A549 (cell line): ENCODE measurements at regions of chr1 and their contacts with region 1.

Region 1: DNA sequence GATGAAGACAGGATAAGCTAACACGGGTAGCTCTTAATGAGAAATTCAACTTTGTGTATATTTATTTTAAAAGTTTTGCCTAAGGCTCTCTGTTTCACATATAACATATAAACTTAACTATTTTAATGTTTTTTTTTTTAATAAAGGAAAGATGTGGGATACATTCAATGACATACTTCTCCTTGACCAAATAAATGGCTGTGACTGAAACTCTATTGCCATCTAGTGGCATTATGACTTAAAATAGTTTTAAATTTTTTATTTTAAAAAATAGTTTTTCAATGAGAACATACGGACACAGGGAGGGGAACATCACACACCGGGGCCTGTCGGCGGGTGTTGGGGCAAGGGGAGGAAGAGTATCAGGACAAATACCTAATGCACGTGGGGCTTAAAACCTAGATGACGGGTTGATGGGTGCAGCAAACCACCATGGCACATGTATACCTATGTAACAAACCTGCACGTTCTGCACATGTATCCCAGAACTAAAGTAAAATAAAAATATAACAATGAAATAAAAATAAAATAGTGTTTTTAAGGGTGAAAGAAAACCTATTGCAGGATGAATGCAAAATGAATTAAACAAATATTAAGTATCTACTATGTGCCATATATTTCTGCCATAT is 83.4 kb downstream of the LYST start:
- DNase-seq: peak; percentile 15 to 50
- ATAC-seq: peak in 1 of 2 experiments; percentile 42; a peak in 2 of 6 replicates
- H3K4me3 ChIP-seq: no peak overlapping the region
- H3K27ac ChIP-seq: peak overlapping the region in 1 of 2 experiments; percentile 55; a peak in 1 of 6 replicates
- H3K4me1 ChIP-seq: 0 out of 3 replicates have a peak, but pooled peaks cover 5% of the 10 kb centered on the region
- CTCF ChIP-seq: peak; percentile 77
- EP300 ChIP-seq: no peak
- POLR2A ChIP-seq: no peak
- RAD21 ChIP-seq: peak; percentile 81 to 90

Region 2: DNA sequence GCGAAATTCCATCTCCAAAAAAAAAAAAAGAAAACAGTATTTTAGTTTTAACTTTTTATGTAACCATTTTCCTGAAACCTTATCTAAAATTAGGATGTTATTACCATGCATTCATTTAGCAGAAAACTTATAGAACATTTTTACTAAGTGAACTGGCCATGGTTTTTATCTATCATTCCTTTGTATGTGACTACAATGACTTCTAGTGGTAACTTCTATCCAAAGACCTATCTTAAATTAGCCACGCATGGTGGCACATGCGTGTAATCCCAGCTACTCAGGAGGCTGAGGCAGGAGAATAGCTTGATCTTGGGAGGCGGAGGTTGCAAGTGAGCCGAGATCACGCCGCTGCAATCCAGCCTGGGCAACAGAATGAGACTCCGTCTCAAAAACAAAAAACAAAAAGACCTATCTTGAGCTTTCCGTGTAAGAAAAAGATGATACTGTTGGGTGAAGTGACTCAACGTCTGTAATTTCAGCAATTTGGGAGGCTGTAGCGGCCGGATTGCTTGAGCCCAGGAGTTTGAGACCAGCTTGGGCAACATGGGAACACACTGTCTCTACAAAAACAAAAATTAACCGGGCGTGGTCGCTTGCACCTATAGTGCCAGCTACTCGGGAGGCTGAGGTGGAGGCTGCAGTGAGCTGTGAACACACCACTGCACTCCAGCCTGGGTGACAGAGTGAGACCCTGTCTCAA is 443.4 kb before region 1 on chr1:
- CTCF ChIA-PET with region 1: no interaction called
- POLR2A ChIA-PET with region 1: no interaction called
- DNase-seq: no peak
- ATAC-seq: no peak
- H3K4me3 ChIP-seq: no peak overlapping the region
- H3K27ac ChIP-seq: no peak overlapping the region
- H3K4me1 ChIP-seq: no peaks in the 10 kb centered on the region
- CTCF ChIP-seq: no peak
- EP300 ChIP-seq: no peak
- POLR2A ChIP-seq: no peak
- RAD21 ChIP-seq: no peak

Region 3: DNA sequence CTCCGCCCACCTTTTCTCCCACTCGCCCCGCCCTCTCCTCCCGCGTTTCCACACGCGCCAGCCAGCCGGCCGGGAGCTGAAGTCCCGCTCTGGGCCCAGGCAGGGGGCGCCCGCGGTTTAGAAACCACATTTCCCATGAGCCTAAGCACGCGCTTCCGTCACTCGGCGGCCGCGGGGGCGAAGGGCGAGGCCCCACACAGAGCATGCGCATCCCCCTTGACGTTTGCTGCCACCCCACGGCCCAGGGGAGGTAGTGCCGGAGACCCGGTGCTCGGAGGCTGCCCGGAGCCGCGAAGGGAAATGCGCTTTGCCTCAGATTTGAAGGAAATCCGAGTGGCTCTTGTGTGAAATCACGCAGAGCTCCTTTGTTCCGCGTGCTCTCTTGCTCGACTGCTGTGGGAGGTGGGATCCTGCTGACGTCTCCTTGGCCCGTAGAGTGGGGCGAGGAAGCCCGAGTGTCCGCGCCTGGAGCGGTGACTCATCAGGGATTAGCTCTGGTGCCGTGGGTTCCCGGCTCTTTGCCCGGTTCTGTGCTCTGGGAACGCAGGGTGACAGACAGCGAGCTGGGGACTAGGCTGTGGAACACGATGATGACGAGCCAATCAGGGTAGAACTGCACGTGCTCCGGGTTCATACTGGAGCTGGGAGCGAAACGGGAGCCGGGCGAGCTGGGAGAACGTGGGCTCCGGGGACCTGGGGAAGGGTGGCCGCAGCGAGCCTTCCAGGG is 278.6 kb before region 1 on chr1:
- CTCF ChIA-PET with region 1: interaction called, 20 read pairs
- POLR2A ChIA-PET with region 1: interaction called, 6 read pairs
- DNase-seq: peak; percentile 89 to 99
- ATAC-seq: peak; percentile 84 to 91
- H3K4me3 ChIP-seq: peak overlapping the region; percentile 82
- H3K27ac ChIP-seq: peak overlapping the region; percentile 89 to 97
- H3K4me1 ChIP-seq: peaks cover 19% of the 10 kb centered on the region
- CTCF ChIP-seq: peak; percentile 73
- EP300 ChIP-seq: no peak
- POLR2A ChIP-seq: peak; percentile 67
- RAD21 ChIP-seq: peak; percentile 42 to 48; a peak in 3 of 5 replicates

Region 4: DNA sequence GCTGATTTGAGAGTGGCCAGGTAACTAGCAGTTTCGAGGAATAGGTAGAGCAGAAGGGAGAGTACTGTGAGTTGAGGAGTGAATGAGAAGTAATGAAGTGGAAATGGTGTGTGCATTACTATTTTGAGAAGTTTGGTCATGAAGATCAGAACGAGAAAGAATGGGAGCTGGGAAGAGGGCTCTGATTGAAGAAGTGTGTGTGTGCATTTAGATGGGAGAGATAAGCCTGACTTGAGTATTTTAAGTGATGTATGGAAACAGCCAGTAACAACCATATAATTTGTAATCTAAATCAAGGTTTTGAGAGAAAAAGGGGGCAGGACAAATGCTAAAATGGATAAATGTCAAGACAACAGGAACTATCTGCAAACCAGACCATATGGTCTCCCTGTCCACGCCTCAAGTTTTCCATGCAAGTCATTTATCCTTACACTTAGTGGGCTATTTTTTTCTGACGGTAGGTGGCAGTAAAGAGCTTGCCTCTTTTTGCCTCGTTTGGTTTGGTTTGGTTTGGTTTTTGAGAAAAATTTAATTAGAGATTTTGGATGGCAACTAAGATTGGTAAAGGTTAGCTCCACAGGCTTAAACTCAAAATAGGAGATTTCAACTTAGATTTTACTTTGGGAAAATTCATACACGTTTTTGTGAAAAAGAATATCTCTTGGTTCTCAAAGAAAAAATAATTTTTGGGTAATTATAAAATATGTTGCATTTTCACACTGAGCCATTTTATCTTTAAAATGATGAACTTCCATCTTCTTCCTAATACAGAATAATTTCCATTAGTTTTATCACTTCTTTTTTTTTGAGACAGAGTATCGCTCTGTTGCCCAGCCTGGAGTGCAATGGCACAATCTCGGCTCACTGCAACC is 269.5 kb before region 1 on chr1:
- CTCF ChIA-PET with region 1: interaction called, 59 read pairs
- POLR2A ChIA-PET with region 1: no interaction called
- DNase-seq: peak; percentile 38 to 74
- ATAC-seq: peak; percentile 71 to 79; a peak in 5 of 6 replicates
- H3K4me3 ChIP-seq: no peak overlapping the region
- H3K27ac ChIP-seq: no peak overlapping the region
- H3K4me1 ChIP-seq: no peaks in the 10 kb centered on the region
- CTCF ChIP-seq: peak; percentile 96
- EP300 ChIP-seq: no peak
- POLR2A ChIP-seq: no peak
- RAD21 ChIP-seq: peak; percentile 86 to 88

Region 5: DNA sequence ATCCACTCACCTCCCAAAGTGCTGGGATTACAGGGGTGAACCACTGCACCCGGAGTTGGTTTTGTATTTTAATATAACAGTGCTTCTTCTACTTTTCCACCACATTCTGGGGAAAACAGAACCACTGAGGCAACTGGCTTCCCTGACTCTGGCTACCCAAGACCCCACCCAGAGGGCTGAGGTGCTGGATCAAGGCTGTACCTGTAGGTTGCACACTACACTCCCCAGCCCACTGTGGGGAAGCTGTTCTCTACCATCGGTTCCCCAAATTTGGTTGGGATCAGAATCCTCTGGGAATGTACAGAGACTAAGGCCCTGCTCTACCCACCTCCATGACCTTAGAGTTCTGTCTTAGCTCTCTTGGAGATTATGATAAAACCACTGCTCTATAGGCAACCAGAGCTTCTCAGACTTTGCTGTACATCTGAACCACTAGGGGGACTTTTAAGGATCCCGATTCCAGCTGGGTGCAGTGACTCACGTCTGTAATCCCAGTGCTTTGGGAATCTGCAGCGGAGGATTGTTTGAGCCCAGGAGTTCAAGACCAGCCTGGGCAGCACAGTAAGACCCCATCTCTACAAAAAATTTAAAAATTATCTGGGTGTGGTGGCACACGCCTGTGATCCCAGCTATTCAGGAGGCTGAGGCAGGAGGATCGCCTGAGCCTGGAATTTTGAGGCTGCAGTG is 185.3 kb before region 1 on chr1:
- CTCF ChIA-PET with region 1: interaction called, 58 read pairs
- POLR2A ChIA-PET with region 1: no interaction called
- DNase-seq: peak; percentile 58 to 71
- ATAC-seq: peak; percentile 92 to 93
- H3K4me3 ChIP-seq: no peak overlapping the region
- H3K27ac ChIP-seq: no peak overlapping the region
- H3K4me1 ChIP-seq: no peaks in the 10 kb centered on the region
- CTCF ChIP-seq: peak; percentile 46
- EP300 ChIP-seq: no peak
- POLR2A ChIP-seq: no peak
- RAD21 ChIP-seq: peak; percentile 30 to 42; a peak in 3 of 5 replicates

Region 6: GRCh38 chr1:235725434-235725833 is 57.8 kb before region 1 on chr1:
- CTCF ChIA-PET with region 1: no interaction called
- POLR2A ChIA-PET with region 1: no interaction called
- DNase-seq: no peak
- ATAC-seq: no peak
- H3K4me3 ChIP-seq: no peak overlapping the region
- H3K27ac ChIP-seq: peak overlapping the region in 1 of 2 experiments; percentile 18; a peak in 1 of 6 replicates
- H3K4me1 ChIP-seq: no peaks in the 10 kb centered on the region
- CTCF ChIP-seq: no peak
- EP300 ChIP-seq: no peak
- POLR2A ChIP-seq: no peak
- RAD21 ChIP-seq: no peak

Region 7: GRCh38 chr1:235757587-235758096 is 25.6 kb before region 1 on chr1:
- CTCF ChIA-PET with region 1: interaction called, 11 read pairs
- POLR2A ChIA-PET with region 1: no interaction called
- DNase-seq: no peak
- ATAC-seq: no peak
- H3K4me3 ChIP-seq: no peak overlapping the region
- H3K27ac ChIP-seq: no peak overlapping the region
- H3K4me1 ChIP-seq: no peaks in the 10 kb centered on the region
- CTCF ChIP-seq: no peak
- EP300 ChIP-seq: no peak
- POLR2A ChIP-seq: no peak
- RAD21 ChIP-seq: no peak

Region 8: DNA sequence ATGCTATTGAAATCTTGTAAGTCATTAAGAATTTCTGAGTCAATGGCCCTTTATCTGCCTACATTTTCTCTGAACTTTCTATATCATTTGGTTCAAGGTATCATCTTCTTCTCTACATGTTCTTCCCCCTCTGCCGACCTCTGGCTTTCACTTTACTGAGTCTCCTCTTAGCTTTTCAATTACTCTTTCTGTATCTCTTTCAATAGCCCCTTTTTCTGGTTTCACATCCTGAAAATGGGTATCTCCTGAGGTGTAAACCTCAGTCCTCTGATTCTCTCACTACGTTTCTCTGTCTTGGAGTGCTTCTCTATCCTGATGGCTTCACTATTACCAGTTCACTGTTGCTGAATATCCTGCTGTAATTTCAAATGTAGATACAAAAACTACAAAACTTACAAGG is 15.5 kb before region 1 on chr1:
- CTCF ChIA-PET with region 1: interaction called, 25 read pairs
- POLR2A ChIA-PET with region 1: interaction called, 6 read pairs
- DNase-seq: no peak
- ATAC-seq: no peak
- H3K4me3 ChIP-seq: no peak overlapping the region
- H3K27ac ChIP-seq: no peak overlapping the region
- H3K4me1 ChIP-seq: no peaks in the 10 kb centered on the region
- CTCF ChIP-seq: no peak
- EP300 ChIP-seq: no peak
- POLR2A ChIP-seq: no peak
- RAD21 ChIP-seq: no peak